RWPE1 (cell line): ENCODE measurements at regions of chr2 and their contacts with region 1.

Region 1: DNA sequence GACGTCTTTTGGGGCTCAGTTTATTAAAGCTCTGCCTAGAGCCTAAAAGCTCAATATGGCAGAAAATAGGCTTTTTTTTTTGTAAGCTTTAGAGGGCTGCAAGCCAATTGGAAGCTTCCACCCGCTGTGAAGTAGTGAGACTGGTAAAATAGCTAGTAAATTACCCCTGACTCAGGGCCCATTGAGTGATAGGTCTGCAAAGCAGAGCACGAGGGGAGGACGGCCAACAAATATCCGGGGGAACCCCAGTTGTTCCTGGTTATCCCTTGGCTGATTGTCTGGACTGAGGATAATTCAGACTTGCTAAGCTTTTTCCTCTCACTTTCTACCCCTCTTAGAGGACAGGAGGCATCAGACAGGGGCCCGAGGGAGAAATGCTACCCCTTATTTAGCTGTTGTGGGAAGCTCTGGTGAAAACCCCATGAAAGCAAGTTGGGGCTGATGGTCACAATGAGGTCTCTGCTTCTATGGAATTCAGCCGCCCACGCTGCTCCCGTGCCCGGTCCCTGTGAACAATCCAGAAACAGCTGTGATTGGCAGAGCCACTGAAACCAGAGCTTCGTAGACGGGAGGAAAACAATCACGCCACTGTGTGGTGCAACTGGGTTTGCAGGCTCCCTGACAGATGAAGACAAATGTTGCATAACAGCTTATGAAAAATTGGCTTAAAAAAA is 141.9 kb upstream of the LGALSL start:
- DNase-seq: peak; percentile 87
- H3K27ac ChIP-seq: peak overlapping the region; percentile 44
- CTCF ChIP-seq: peak; percentile 40

Region 2: DNA sequence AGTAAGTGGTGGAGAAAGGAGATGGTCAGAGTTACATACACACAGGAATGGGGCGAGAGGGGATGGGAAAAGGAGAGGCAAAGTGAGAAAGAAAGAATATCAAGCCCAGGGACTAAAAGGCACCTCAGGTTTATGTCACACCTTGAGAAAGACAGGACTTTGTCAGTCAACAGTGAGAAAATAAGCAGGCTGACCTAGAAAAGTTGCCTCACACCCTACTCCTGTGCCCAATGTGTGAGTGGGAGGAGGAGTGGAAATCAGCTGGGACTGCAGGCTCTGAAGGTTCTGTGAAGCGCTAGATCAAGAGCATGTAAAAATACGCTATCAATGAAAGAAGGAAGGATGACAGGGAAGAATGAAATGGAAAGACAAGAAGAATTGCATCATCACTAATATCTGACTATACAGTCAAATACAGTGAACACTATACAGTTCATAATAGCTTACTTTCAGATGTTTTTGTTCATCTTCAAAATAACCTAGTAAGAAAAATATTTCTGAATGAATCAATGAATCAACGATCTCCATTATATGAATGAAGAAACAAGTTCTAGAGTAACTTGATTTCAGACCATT is 303.6 kb before region 1 on chr2:
- CTCF ChIA-PET with region 1: no interaction called
- POLR2A ChIA-PET with region 1: no interaction called
- DNase-seq: no peak
- H3K27ac ChIP-seq: no peak overlapping the region
- CTCF ChIP-seq: no peak

Region 3: DNA sequence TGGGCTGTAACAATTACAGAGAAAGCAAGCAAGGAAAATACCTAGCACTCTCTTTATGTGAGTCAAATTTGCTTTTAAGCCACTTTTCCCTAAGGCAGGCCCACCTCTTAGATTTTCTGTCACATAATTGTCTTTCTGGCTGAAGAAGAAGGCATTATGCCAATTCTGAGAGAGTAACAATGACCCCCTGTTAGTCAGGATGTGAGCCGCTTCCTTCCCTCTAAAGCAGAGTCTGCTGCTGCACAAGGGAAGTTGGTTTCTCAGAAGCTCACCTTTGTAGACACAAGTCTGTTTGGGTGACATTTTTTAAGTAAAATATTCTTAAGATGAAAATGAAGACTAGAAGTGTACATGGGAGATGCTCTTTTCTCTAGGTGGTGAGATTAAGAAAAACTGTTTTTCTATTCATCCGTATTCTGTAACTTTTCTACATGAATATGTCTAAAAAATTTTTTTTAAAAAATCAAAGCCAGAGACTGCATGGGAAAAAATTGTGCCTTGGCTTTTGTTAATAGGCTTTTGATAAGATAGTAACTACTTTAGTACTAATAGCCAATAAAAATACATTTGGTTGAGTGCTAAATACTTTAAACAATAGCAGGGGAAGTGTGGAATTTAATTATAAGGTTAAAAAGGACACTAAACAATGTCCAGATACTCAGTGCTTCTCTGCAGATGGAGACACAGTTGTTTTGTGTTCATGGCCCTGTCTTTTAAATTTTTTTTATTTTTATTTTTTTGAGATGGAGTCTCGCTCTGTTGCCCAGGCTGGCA is 259.4 kb before region 1 on chr2:
- CTCF ChIA-PET with region 1: interaction called, 42 read pairs
- POLR2A ChIA-PET with region 1: interaction called, 3 read pairs
- DNase-seq: peak; percentile 8
- H3K27ac ChIP-seq: no peak overlapping the region
- CTCF ChIP-seq: no peak